Right ventricle myocardium superior (tissue), 1 donor: ENCODE measurements at regions of chr6 and their contacts with region 1.

Region 1: GRCh38 chr6:33771146-33772081 is 17.5 kb downstream of the LEMD2 start:
- DNase-seq: peak; percentile 83
- ATAC-seq: peak; percentile 87

Region 2: DNA sequence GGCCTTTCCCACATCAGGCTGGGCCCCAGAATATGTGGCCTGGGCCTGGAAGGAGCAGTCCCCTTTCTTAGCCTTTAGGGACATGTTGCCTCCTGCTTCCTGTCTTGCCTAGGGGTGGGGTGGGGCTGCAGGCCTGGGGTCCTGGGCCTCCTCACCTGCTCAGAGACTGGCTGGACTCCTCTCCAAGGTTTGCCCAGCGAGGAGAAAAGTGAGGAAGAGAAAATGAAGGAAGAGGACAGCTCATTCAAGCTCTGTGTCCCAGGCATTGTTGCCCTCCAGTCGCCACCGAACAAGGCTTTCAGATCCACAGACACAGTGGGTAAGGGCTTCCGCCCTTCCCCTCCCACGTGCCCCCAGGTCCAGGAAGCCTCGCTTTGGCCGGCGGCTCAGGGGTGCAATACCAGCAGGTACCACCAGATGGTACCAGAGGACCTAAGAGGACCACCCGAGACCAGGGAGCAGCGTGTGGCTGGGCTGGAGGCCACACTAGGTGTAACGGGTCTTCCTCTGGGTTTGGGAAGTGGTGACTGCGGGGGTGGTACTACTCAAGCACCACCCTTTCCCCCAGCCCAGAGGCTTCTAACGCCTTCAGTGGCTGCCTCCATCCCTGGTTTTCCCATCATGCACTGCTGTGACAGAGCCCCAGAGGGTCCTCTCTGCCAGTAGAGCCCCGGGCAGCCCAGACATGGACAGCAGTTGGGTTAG is 185.9 kb before region 1 on chr6:
- intact Hi-C with region 1: loop called (anchors 5 kb)
- DNase-seq: peak; percentile 90
- ATAC-seq: peak; percentile 71

Region 3: DNA sequence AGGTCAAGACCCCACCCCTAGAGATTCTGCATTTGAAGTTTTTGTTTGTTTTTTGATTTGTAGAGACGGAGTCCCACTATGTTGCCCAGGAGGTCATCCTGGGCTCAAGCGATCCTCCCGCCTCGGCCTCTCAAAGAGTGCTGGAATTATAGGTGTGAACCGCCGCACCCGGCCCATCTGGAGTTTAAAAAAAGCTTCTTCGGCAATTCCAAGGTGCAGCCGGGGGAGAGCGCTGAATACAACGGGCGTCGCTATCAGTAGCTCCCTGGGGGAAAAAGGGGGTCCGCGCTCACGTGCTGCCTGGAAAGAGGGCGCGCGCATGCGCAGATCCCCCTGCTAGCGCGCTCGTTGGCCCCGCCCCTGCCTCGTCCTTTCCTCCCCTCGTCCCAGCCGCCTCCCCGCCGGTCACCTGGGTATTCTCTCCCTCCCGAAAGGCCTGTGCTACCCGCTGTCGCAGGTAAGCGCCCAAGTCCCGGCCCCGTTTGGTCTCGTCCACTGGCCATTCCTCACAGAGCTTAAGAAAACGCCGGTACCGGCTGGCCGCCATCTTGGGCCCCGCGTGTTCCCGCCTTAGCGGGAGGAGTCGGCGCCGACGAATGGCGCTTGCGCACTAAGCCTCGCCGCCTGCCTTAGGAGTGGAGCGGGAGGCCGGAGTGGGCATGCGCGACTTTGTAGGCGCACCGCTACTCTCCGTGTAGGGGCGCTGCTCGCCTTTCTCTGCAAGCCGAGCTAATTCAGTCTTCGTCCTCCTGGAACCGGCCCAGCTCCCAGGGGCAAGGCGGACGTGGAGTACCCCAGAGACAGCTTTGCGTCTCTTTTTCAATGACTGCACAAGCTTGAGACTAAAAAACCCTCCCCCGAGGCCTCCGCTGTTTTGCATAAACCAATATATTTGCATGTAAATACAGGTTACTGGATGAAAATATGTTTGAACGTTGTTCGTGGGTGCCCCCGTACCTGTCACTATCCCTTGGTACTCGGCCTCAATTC is 60.0 kb before region 1 on chr6 and contains the start of gene UQCC2:
- intact Hi-C with region 1: no loop called
- DNase-seq: peak; percentile 99
- ATAC-seq: peak; percentile 98
- total RNA-seq, gene UQCC2: 208 TPM

Region 4: GRCh38 chr6:33860706-33861474 is 89.5 kb after region 1 on chr6:
- intact Hi-C with region 1: no loop called
- DNase-seq: no peak
- ATAC-seq: no peak

Region 5: DNA sequence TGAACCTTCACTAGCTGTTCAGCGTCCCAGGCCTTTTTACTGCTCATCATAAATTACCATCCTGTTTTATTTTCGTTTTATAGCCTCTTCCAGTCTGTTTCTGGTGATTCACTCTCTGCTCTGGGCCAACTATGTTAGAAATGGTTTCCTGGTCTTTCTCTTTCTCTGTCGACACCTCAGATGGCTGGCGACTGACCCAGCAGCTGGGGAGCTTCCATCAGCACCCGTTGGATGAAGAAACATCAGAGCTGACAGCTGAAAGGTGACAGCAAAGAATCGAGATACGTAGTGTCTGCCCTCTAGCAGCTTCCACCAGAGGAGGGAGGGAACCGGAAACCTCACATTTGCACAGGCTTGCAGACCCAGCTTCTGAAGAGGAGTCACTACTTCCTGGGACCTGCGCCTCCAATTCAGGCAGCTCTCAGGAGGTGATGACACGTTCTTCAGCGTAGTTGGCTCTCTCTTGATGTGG is 115.3 kb after region 1 on chr6:
- intact Hi-C with region 1: loop called (anchors 10 kb)
- DNase-seq: peak; percentile 86
- ATAC-seq: peak; percentile 92

Region 6: GRCh38 chr6:34027445-34027936 is 256.1 kb after region 1 on chr6:
- intact Hi-C with region 1: loop called (anchors 2 kb)
- DNase-seq: peak; percentile 59
- ATAC-seq: peak; percentile 73

Region 7: GRCh38 chr6:34154668-34155447 is 383.4 kb after region 1 on chr6:
- intact Hi-C with region 1: loop called (anchors 5 kb)
- DNase-seq: peak; percentile 69
- ATAC-seq: peak; percentile 90